Right ventricle myocardium inferior (tissue), 1 donor: ENCODE measurements at regions of chr2 and their contacts with region 1.

Region 1: GRCh38 chr2:71545572-71546274 is 92.4 kb downstream of the DYSF start:
- DNase-seq: no peak
- ATAC-seq: peak; percentile 67

Region 2: DNA sequence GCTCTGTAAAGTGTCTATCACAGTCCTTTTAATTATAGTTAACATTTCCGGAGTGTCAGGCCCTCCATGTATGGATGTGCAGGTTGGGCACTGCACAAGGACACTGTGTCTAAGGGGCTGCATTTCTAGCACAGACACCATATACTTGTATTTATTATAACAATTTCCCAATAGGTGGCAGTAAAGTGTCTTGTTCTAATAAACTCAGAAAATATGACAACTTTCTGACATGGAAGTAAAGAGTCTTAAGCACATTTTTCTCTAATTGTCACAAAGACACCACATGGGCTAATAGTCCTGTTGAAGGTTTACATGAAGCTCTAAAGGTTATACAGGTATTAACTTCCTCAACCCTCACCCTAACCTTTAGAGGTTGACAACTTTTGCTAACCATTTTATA is 64.2 kb after region 1 on chr2:
- intact Hi-C with region 1: loop called (anchors 5 kb)
- DNase-seq: no peak
- ATAC-seq: no peak

Region 3: DNA sequence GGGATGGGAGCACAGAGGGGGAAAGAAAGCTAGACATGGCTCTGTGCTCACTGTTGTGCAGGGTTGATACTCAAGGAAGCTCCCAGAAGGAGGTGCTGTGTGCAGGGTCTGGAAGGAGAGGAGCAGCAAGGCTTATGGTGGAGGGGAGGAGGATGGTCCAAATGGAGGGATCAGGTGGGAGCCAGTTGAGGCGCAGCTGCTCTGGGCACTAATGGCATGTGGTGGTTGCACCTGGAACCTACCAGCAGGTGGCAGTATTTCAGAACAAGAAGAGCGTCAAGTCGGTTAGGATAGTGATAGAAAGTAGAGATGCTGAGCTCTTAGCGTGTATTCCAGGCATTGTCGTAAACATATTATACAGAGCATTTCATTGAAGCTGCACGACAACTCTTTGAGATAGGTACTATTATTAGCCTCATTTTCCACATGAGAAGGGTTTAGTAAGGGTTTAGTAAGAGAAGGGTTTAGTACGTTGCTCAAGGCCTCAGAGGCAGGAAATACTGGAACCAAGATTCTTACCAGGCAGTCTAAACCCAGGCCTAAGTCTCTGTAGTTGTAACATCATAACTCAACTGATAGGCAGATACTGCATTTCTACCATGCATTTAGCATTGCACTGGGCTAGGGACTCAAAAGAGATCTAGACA is 378.3 kb after region 1 on chr2:
- intact Hi-C with region 1: loop called (anchors 5 kb)
- DNase-seq: peak; percentile 75
- ATAC-seq: peak; percentile 74

Region 4: DNA sequence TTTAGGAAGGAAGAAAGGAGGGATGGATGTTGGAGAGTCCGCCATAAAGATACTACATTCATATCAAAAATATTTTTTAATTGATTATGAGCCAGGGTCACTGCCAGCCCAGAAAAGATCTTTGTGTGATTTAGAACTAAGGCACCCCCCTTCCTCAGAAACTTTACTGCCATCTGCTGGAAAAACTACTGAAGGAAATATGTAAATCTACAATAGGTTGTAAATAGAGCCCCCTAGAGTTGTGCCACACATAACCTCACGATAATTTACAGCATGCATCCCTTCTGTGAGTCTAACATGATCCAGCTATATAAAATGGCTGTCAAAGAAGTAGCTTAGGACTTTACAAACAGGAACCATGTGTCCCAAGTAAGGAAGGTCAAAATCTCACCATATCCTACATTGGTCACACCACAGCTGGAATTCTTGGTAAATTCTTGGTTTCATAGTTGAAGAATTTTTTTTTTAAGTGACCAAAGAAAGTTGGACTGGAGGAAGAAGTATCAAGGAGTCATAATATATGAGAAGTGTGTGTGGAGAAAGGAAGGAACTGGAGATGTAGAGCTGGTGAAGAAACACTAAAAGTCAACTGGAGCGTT is 449.4 kb after region 1 on chr2:
- intact Hi-C with region 1: loop called (anchors 5 kb)
- DNase-seq: no peak
- ATAC-seq: no peak